WTC11 (cell line): ENCODE measurements at regions of chr10 and their contacts with region 1.

Region 1: GRCh38 chr10:44925224-44925623 is 14.1 kb downstream of the TMEM72 start:
- DNase-seq: peak; percentile 79
- ATAC-seq: peak; percentile 90
- H3K4me3 Mint-ChIP-seq: no peak overlapping the region
- H3K27ac Mint-ChIP-seq: no peak overlapping the region
- H3K4me1 Mint-ChIP-seq: no peaks in the 10 kb centered on the region
- H3K27me3 Mint-ChIP-seq: peaks cover 10% of the 10 kb centered on the region
- CTCF ChIP-seq: peak; percentile 26

Region 2: GRCh38 chr10:43781480-43782361 is 1143.5 kb before region 1 on chr10:
- CTCF ChIA-PET with region 1: no interaction called
- POLR2A ChIA-PET with region 1: no interaction called
- DNase-seq: no peak
- ATAC-seq: no peak
- H3K4me3 Mint-ChIP-seq: no peak overlapping the region
- H3K27ac Mint-ChIP-seq: no peak overlapping the region
- H3K4me1 Mint-ChIP-seq: no peaks in the 10 kb centered on the region
- H3K27me3 Mint-ChIP-seq: no peaks in the 10 kb centered on the region
- CTCF ChIP-seq: no peak

Region 3: DNA sequence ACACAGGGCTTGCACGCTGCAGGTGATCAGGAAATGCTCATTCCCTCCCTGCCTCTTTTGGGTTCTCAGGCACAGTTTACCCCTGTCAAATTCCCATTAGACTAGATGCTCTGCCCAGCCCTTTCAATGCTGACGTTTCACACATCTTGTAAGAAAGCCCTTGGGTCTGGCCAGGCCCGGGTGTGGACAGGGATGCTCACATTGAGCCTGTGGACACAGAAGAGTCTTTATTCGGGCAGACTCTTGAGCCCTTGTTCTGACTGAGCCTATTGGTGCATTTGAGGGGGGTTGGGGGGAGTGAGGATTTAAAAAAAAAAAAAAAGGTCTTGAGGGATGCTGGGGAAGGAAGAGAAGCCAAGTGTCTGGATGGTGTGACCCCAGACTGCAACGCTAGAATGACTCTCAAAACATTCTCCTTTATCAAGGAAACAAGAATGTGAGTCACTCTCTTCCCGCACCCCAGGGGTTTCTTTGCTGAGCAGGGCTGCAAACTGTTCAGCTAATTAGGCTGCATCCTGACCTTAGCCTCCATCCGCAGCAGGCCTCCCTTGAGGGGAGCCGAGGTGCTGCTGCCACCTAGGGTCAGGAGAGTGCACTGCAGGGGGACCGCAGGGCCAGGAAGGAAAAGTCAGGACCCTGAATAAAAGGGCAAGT is 67.7 kb before region 1 on chr10:
- CTCF ChIA-PET with region 1: interaction called, 54 read pairs
- POLR2A ChIA-PET with region 1: no interaction called
- DNase-seq: peak; percentile 92
- ATAC-seq: peak; percentile 89
- H3K4me3 Mint-ChIP-seq: no peak overlapping the region
- H3K27ac Mint-ChIP-seq: no peak overlapping the region
- H3K4me1 Mint-ChIP-seq: peaks cover 38% of the 10 kb centered on the region
- H3K27me3 Mint-ChIP-seq: peaks cover 38% of the 10 kb centered on the region
- CTCF ChIP-seq: peak; percentile 95

Region 4: DNA sequence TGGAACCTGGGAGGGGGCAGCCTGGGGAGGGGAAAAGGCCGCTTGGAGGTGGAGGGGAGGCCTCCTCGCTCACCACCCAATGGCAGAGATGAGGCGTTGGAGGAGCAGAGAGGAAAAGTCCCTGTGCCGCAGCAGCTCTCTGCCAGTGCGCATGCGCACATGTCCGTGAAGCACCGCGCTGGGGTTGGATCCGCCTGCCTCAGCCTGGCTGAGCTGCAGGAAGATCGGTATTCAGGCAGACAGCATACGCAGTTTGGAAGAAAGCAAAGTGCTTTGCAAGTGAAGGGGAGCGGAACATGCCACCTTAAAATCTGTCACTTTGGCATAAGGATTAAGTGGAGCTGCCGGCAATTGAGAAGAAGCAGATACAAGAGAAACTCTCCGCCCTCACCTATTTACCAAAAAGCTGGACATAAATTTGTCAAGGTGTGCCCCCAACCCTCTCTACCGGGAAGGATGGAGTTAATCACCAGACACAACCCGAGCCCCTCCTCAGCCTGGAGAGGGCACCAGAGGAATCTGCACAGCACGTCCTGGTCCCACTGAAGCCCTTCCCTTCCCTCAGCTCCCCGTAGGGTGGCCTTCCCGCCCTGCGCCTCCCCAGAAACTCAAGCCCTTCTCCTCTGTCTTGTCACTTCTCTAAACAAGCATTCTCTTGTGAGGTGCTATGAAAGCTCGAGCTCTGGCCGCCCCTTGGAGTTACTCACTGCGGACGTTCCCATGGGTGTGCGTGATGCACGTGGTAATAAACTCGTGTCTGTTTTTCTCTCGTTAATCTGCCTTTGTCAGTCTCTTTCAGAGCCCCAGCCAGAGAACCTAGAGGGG is 46.3 kb before region 1 on chr10:
- CTCF ChIA-PET with region 1: interaction called, 43 read pairs
- POLR2A ChIA-PET with region 1: no interaction called
- DNase-seq: peak; percentile 91
- ATAC-seq: peak; percentile 93
- H3K4me3 Mint-ChIP-seq: peak overlapping the region; percentile 72
- H3K27ac Mint-ChIP-seq: peak overlapping the region; percentile 94; the same call in 1 of the 2 replicates
- H3K4me1 Mint-ChIP-seq: peaks cover 26% of the 10 kb centered on the region
- H3K27me3 Mint-ChIP-seq: peaks cover 23% of the 10 kb centered on the region
- CTCF ChIP-seq: no peak

Region 5: GRCh38 chr10:44908066-44908749 is 17.0 kb before region 1 on chr10:
- CTCF ChIA-PET with region 1: interaction called, 25 read pairs
- POLR2A ChIA-PET with region 1: no interaction called
- DNase-seq: peak; percentile 35
- ATAC-seq: peak; percentile 58
- H3K4me3 Mint-ChIP-seq: no peak overlapping the region
- H3K27ac Mint-ChIP-seq: no peak overlapping the region
- H3K4me1 Mint-ChIP-seq: peaks cover 38% of the 10 kb centered on the region
- H3K27me3 Mint-ChIP-seq: no peaks in the 10 kb centered on the region; the same call in 1 of the 2 replicates
- CTCF ChIP-seq: no peak